Activated T-helper 1 cell treated with anti-CD3 and anti-CD28 coated beads, Interleukin-12 subunit alpha, Interleukin-12 subunit beta, Interleukin-2, Interleukin-4 antibody, amounts not matched to agents 30 ng/mL and 10 ng/mL and 1 ng/mL, durations not matched to agents 14 hours and 24 hours and 36 hours (primary cell): ENCODE measurements at regions of chr15 and their contacts with region 1.

Region 1: GRCh38 chr15:94576889-94577533 is 345.6 kb downstream of the MCTP2 start:
- DNase-seq: peak; percentile 16
- H3K4me3 Mint-ChIP-seq: no peak overlapping the region
- H3K27ac Mint-ChIP-seq: no peak overlapping the region
- H3K4me1 Mint-ChIP-seq: peaks cover 11% of the 10 kb centered on the region
- H3K27me3 Mint-ChIP-seq: peaks cover 57% of the 10 kb centered on the region

Region 2: DNA sequence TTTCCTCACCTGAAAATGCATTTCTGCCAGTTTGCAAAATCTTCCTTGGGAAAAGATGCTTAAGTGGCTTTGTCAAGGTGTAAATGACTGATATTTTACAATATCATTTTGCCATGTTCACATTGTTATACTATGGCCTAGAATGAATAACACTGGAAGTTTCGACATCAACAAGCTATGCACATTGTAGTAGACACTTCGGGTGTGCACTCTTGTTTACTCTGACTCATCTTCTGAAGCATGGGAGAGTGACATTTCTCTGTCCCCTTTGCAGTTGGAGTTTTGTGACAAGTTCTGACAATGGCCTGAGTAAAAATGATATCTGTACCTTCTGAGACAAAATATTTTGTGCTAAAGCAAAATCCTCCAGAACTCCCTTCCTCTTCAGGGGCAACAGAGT is 921.0 kb before region 1 on chr15:
- intact Hi-C with region 1: no loop called
- DNase-seq: no peak
- H3K4me3 Mint-ChIP-seq: no peak overlapping the region
- H3K27ac Mint-ChIP-seq: no peak overlapping the region
- H3K4me1 Mint-ChIP-seq: no peaks in the 10 kb centered on the region
- H3K27me3 Mint-ChIP-seq: no peaks in the 10 kb centered on the region

Region 3: GRCh38 chr15:94412979-94413746 is 163.8 kb before region 1 on chr15:
- intact Hi-C with region 1: loop called (anchors 1 kb)
- DNase-seq: no peak
- H3K4me3 Mint-ChIP-seq: no peak overlapping the region
- H3K27ac Mint-ChIP-seq: no peak overlapping the region
- H3K4me1 Mint-ChIP-seq: no peaks in the 10 kb centered on the region
- H3K27me3 Mint-ChIP-seq: no peaks in the 10 kb centered on the region

Region 4: DNA sequence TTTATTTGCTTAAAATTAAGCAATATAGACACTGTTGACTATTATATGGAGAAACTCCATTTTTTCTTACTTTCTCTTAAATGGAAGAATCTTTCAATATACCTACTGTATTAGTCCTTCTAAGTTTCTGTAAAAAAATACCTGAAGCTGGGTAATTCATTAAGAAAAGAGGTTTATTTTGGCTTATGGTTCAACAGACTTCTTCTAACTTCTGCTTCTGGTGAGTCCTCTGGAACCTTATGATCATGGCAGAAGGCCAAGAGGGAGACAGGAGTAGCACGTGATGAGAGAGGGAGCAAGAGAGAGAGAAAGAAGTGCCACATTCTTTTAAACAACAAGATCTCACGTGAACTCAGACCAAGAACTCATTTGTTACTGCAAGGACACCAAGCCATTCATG is 227.6 kb after region 1 on chr15:
- intact Hi-C with region 1: no loop called
- DNase-seq: no peak
- H3K4me3 Mint-ChIP-seq: no peak overlapping the region
- H3K27ac Mint-ChIP-seq: no peak overlapping the region
- H3K4me1 Mint-ChIP-seq: no peaks in the 10 kb centered on the region
- H3K27me3 Mint-ChIP-seq: peaks cover 2% of the 10 kb centered on the region